Activated naive CD4-positive, alpha-beta T cell treated with anti-CD3 and anti-CD28 coated beads for 36 hours (primary cell): ENCODE measurements at regions of chr1 and their contacts with region 1.

Region 1: GRCh38 chr1:201042779-201043461 is 19.4 kb upstream of the KIF21B start:
- DNase-seq: peak; percentile 83
- H3K4me3 Mint-ChIP-seq: no peak overlapping the region
- H3K27ac Mint-ChIP-seq: no peak overlapping the region
- H3K4me1 Mint-ChIP-seq: no peaks in the 10 kb centered on the region
- H3K27me3 Mint-ChIP-seq: no peaks in the 10 kb centered on the region

Region 2: GRCh38 chr1:200802865-200803512 is 239.9 kb before region 1 on chr1:
- CTCF ChIA-PET with region 1: no interaction called
- intact Hi-C with region 1: loop called (anchors 10 kb)
- DNase-seq: peak; percentile 90
- H3K4me3 Mint-ChIP-seq: no peak overlapping the region
- H3K27ac Mint-ChIP-seq: no peak overlapping the region
- H3K4me1 Mint-ChIP-seq: peaks cover 4% of the 10 kb centered on the region
- H3K27me3 Mint-ChIP-seq: no peaks in the 10 kb centered on the region

Region 3: DNA sequence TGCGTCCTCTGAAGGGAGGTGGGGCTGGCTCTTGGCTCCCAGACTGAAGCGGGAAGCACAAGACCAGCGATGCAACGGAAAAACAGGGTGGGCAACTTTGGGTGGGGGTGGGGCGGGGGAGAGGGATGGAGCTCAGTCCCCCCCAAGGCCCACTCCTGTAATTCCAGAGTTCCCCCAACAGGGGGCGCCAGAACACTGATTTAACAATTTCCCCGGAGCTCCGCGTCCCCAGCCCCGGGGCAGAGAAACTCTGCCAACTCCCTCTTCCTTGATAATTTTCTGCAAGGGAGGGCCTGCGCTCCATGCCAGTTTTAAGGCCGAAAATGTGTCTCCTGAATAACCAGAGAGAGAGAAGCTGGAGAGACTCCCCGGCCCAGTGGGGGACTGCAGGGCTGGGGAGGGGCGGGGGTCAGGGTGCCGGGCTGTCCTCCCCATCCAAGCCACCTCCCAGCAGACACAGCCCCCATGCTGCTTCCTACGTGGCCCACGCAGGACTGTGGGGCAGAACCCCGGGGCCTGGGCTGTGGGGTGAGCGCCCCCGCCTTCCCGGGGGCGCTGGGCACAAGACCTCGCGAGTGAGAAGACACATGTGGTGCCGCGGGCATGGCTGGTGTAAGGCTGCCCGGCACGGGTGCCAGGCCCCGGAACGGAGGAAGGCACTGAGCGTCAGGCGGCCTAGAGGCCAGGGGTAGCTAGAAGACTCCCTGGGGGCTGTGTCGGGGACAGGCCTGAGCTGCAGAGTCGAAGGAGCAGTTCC is 70.8 kb before region 1 on chr1:
- CTCF ChIA-PET with region 1: interaction called, 161 read pairs
- intact Hi-C with region 1: loop called (anchors 1 kb)
- DNase-seq: peak; percentile 76
- H3K4me3 Mint-ChIP-seq: no peak overlapping the region
- H3K27ac Mint-ChIP-seq: no peak overlapping the region
- H3K4me1 Mint-ChIP-seq: peaks cover 4% of the 10 kb centered on the region
- H3K27me3 Mint-ChIP-seq: no peaks in the 10 kb centered on the region

Region 4: DNA sequence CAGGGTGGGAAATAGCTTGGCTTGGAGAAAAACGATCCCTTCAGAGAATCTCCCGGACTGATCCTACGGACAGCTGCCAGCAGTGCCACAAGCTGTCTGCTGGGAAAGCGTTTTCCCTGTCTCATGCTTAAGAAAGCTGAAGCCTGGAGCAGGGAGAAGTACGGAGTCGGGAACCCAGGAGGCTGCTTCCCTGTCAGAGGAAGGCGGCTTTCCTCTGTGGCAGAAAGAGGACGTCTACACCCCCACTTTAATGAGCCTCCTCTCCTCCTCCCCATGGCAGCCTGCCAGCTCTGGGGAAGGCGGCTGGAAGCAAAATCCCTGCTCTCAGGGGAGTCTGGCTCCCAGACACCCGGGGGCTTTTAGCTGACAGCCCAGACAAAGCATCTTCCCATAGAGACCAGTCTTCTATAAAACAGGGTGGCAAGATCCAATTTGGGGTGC is 26.7 kb before region 1 on chr1:
- CTCF ChIA-PET with region 1: interaction called, 13 read pairs
- intact Hi-C with region 1: loop called (anchors 1 kb)
- DNase-seq: no peak
- H3K4me3 Mint-ChIP-seq: no peak overlapping the region
- H3K27ac Mint-ChIP-seq: peak overlapping the region; percentile 82
- H3K4me1 Mint-ChIP-seq: peaks cover 92% of the 10 kb centered on the region
- H3K27me3 Mint-ChIP-seq: no peaks in the 10 kb centered on the region

Region 5: GRCh38 chr1:201436393-201436792 is 393.5 kb after region 1 on chr1:
- CTCF ChIA-PET with region 1: no interaction called
- intact Hi-C with region 1: no loop called
- DNase-seq: no peak
- H3K4me3 Mint-ChIP-seq: no peak overlapping the region
- H3K27ac Mint-ChIP-seq: no peak overlapping the region
- H3K4me1 Mint-ChIP-seq: peaks cover 5% of the 10 kb centered on the region
- H3K27me3 Mint-ChIP-seq: peaks cover 6% of the 10 kb centered on the region